Calu3 (cell line): ENCODE measurements at regions of chr7 and their contacts with region 1.

Region 1: GRCh38 chr7:12303495-12303894 is 92.4 kb downstream of the TMEM106B start:
- DNase-seq: no peak
- H3K4me3 Mint-ChIP-seq: no peak overlapping the region
- H3K27ac Mint-ChIP-seq: no peak overlapping the region
- H3K4me1 Mint-ChIP-seq: no peaks in the 10 kb centered on the region
- H3K27me3 Mint-ChIP-seq: no peaks in the 10 kb centered on the region
- CTCF ChIP-seq: no peak

Region 2: GRCh38 chr7:12403287-12404181 is 100.0 kb after region 1 on chr7 and contains the start of gene VWDE:
- CTCF ChIA-PET with region 1: interaction called, 12 read pairs
- intact Hi-C with region 1: no loop called
- DNase-seq: peak; percentile 91
- H3K4me3 Mint-ChIP-seq: peak within 1 kb of the TSS; percentile 98
- H3K27ac Mint-ChIP-seq: peak within 1 kb of the TSS; percentile 93
- H3K4me1 Mint-ChIP-seq: peaks cover 29% of the 10 kb centered on the region
- H3K27me3 Mint-ChIP-seq: no peaks in the 10 kb centered on the region
- CTCF ChIP-seq: no peak
- total RNA-seq, gene VWDE: 20.2 and 21.3 TPM in 2 replicates

Region 3: GRCh38 chr7:12436896-12437535 is 133.5 kb after region 1 on chr7:
- CTCF ChIA-PET with region 1: no interaction called
- intact Hi-C with region 1: no loop called
- DNase-seq: peak; percentile 27
- H3K4me3 Mint-ChIP-seq: no peak overlapping the region
- H3K27ac Mint-ChIP-seq: no peak overlapping the region
- H3K4me1 Mint-ChIP-seq: no peaks in the 10 kb centered on the region
- H3K27me3 Mint-ChIP-seq: no peaks in the 10 kb centered on the region
- CTCF ChIP-seq: no peak